ENCODE measurements at regions of chr15 and their contacts with region 1.

Region 1: DNA sequence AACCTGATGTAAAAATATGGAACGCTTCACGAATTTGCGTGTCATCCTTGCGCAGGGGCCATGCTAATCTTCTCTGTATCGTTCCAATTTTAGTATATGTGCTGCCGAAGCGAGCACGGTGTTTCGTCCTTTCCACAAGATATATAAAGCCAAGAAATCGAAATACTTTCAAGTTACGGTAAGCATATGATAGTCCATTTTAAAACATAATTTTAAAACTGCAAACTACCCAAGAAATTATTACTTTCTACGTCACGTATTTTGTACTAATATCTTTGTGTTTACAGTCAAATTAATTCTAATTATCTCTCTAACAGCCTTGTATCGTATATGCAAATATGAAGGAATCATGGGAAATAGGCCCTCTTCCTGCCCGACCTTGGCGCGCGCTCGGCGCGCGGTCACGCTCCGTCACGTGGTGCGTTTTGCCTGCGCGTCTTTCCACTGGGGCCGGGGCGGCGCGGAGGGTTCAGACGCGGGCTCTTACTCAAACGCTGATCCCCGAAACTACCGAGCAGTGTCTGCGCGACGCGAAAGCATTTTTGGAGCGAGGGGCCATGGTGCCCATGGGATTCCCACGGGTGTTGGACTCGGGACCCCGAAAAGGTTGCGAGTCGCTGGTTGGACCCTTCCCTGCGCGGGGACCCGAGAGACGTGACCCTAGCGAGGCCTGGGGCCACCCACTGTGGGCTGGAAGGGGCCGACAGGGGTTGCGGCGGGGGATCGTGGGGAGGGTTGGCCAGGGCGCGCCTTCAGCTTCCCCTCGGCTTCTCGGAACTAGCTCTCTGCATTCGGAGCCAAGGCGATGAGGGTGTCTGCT is at the start of gene RNU6-1:
- DNase-seq: peak; percentile 94 to 98
- ATAC-seq: peak; percentile 85 to 97 (median 92)
- H3K4me3 ChIP-seq: peak within 1 kb of the TSS; percentile 96
- H3K4me3 Mint-ChIP-seq: peak within 1 kb of the TSS; percentile 96
- H3K27ac ChIP-seq: peak within 1 kb of the TSS; percentile 97
- H3K27ac Mint-ChIP-seq: peak within 1 kb of the TSS; percentile 99
- H3K4me1 ChIP-seq: peaks cover 32% of the 10 kb centered on the region
- H3K4me1 Mint-ChIP-seq: peaks cover 35 to 41% of the 10 kb centered on the region in 2 donors
- H3K27me3 ChIP-seq: peaks cover 13% of the 10 kb centered on the region
- H3K27me3 Mint-ChIP-seq: peaks cover 16 to 20% of the 10 kb centered on the region in 2 donors
- CTCF ChIP-seq: no peak
- total RNA-seq, gene RNU6-1: not detected

Region 2: DNA sequence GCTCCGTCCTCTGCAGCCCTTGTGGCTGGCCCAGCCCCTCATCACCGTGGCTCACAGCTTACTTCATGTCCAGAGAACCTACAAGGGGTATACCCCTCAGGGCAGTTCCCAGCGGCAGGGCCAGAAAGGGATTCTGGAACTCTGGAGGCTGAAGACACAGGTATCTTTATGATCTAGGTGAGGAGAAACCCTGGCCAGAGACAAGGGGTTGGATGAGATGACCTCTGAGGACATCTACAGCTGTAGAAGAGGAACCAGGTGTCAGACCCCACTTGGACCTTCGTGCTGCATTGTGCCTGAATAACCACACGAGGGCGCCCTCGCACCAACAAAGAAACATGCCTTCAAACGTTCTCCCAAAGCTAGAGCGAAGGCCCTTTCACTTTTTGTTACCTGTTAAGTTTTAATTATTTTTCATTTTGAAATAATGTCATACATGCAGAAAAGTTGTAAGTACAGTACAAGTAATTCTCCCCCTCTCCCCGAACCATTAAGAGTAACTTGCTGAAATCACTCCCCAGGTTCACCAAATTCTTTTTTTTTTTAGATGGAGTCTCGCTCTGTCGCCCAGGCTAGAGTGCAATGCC is 893.5 kb before region 1 on chr15:
- intact Hi-C with region 1: loop called (anchors 5 kb)
- DNase-seq: peak; percentile 75 to 88
- ATAC-seq: peak; percentile 70 to 90 (median 86)
- H3K4me3 ChIP-seq: no peak overlapping the region
- H3K4me3 Mint-ChIP-seq: peak overlapping the region; percentile 17
- H3K27ac ChIP-seq: no peak overlapping the region
- H3K27ac Mint-ChIP-seq: no peak overlapping the region
- H3K4me1 ChIP-seq: no peaks in the 10 kb centered on the region
- H3K4me1 Mint-ChIP-seq: no peaks in the 10 kb centered on the region
- H3K27me3 ChIP-seq: no peaks in the 10 kb centered on the region
- H3K27me3 Mint-ChIP-seq: peaks cover 0 to 2% of the 10 kb centered on the region in 2 donors
- CTCF ChIP-seq: peak; percentile 94

Region 3: GRCh38 chr15:67366904-67367303 is 473.2 kb before region 1 on chr15:
- intact Hi-C with region 1: no loop called
- DNase-seq: no peak
- ATAC-seq: no peak
- H3K4me3 ChIP-seq: no peak overlapping the region
- H3K4me3 Mint-ChIP-seq: no peak overlapping the region
- H3K27ac ChIP-seq: no peak overlapping the region
- H3K27ac Mint-ChIP-seq: no peak overlapping the region
- H3K4me1 ChIP-seq: no peaks in the 10 kb centered on the region
- H3K4me1 Mint-ChIP-seq: no peaks in the 10 kb centered on the region
- H3K27me3 ChIP-seq: no peaks in the 10 kb centered on the region
- H3K27me3 Mint-ChIP-seq: peaks cover 3 to 18% of the 10 kb centered on the region in 2 donors
- CTCF ChIP-seq: no peak

Region 4: DNA sequence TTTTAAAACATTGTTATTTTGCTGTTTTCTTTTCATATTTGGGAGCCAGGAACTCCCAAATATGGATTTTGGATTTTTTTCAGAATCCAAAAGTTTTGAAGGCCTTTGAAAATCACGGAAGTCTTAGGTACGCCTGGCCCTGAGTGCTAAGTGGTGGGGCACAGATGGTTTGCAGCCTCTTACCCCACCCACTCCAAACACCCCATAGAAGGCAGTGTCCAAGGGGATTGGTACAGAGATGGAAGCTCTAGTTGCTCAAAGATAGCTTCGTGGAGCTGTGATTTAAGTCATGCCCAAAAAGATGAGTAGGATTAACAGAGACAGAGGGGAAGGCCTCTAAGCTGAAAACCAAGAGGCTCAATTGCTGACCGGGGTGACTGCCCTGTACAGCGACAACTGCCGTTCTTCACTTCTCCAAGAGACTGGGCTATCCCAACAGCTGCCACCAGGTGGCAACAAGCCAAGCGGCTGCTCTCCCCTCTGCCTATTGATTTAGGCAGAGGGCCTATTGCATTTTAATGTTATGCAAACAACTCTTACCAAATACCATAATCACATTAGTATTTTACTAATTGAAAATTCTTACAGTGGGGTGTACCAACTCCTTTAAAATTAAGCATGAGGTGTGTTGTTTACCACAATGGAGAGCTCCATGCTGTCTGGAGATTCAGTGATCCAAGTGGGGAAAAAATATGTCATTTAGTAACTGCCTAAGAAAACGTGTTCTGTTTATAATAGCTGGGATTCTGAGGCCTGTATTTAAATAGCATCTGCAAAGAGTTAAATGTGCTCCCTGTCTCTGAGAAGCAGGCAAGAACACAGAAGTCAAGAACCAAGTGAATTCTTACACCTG is 383.2 kb before region 1 on chr15:
- intact Hi-C with region 1: loop called (anchors 1 kb)
- DNase-seq: peak; percentile 71 to 85
- ATAC-seq: peak; percentile 89 to 99 (median 94)
- H3K4me3 ChIP-seq: no peak overlapping the region
- H3K4me3 Mint-ChIP-seq: no peak overlapping the region
- H3K27ac ChIP-seq: no peak overlapping the region
- H3K27ac Mint-ChIP-seq: no peak overlapping the region
- H3K4me1 ChIP-seq: peaks cover 3% of the 10 kb centered on the region
- H3K4me1 Mint-ChIP-seq: peaks cover 0 to 5% of the 10 kb centered on the region in 2 donors
- H3K27me3 ChIP-seq: no peaks in the 10 kb centered on the region
- H3K27me3 Mint-ChIP-seq: peaks cover 0 to 3% of the 10 kb centered on the region in 2 donors
- CTCF ChIP-seq: peak; percentile 95

Region 5: DNA sequence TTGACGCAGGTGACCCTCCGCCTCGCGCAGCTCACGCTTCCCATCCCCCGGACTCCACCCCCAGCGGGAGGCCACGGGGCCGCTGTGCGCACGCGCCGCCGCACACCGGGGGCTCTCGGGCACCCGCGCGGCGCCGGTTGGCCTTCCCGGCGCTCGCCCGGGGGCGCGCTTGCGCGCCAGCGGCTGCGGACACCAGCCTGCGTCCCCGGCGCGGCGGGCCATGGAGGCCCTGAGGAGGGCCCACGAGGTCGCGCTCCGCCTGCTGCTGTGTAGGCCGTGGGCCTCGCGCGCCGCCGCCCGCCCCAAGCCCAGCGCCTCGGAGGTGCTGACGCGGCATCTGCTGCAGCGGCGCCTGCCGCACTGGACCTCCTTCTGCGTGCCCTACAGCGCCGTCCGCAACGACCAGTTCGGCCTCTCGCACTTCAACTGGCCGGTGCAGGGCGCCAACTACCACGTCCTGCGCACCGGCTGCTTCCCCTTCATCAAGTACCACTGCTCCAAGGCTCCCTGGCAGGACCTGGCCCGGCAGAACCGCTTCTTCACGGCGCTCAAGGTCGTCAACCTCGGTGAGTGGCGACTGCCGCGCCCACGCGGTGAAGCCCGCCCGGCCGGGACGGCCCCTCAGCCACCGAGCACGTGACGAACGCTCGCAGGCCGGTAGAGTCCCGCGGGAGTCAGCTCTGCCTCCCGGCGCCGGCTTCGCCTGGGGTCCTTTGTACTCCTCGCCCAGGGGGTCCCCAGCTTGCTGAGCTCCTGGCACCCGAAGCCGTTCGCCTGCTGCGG is 318.9 kb before region 1 on chr15 and contains the start of gene C15orf61:
- intact Hi-C with region 1: loop called (anchors 1 kb)
- DNase-seq: peak; percentile 83 to 93
- ATAC-seq: peak; percentile 79 to 89 (median 81)
- H3K4me3 ChIP-seq: peak within 1 kb of the TSS; percentile 71
- H3K4me3 Mint-ChIP-seq: peak within 1 kb of the TSS; percentile 93
- H3K27ac ChIP-seq: peak within 1 kb of the TSS; percentile 97
- H3K27ac Mint-ChIP-seq: peak within 1 kb of the TSS; percentile 93 to 96
- H3K4me1 ChIP-seq: peaks cover 9% of the 10 kb centered on the region
- H3K4me1 Mint-ChIP-seq: peaks cover 16 to 22% of the 10 kb centered on the region in 2 donors
- H3K27me3 ChIP-seq: no peaks in the 10 kb centered on the region
- H3K27me3 Mint-ChIP-seq: no peaks in the 10 kb centered on the region
- CTCF ChIP-seq: no peak
- total RNA-seq, gene C15orf61: 8.7 to 16.4 (median 12.6) TPM

Region 6: GRCh38 chr15:67783303-67783702 is 56.8 kb before region 1 on chr15:
- intact Hi-C with region 1: loop called (anchors 1 kb)
- DNase-seq: peak; percentile 33 to 80
- ATAC-seq: peak; percentile 83 to 90 (median 88)
- H3K4me3 ChIP-seq: no peak overlapping the region
- H3K4me3 Mint-ChIP-seq: peak overlapping the region; percentile 72
- H3K27ac ChIP-seq: no peak overlapping the region
- H3K27ac Mint-ChIP-seq: peak overlapping the region; percentile 71 to 79
- H3K4me1 ChIP-seq: peaks cover 28% of the 10 kb centered on the region
- H3K4me1 Mint-ChIP-seq: peaks cover 28 to 29% of the 10 kb centered on the region in 2 donors
- H3K27me3 ChIP-seq: no peaks in the 10 kb centered on the region
- H3K27me3 Mint-ChIP-seq: no peaks in the 10 kb centered on the region
- CTCF ChIP-seq: peak; percentile 16

Region 7: DNA sequence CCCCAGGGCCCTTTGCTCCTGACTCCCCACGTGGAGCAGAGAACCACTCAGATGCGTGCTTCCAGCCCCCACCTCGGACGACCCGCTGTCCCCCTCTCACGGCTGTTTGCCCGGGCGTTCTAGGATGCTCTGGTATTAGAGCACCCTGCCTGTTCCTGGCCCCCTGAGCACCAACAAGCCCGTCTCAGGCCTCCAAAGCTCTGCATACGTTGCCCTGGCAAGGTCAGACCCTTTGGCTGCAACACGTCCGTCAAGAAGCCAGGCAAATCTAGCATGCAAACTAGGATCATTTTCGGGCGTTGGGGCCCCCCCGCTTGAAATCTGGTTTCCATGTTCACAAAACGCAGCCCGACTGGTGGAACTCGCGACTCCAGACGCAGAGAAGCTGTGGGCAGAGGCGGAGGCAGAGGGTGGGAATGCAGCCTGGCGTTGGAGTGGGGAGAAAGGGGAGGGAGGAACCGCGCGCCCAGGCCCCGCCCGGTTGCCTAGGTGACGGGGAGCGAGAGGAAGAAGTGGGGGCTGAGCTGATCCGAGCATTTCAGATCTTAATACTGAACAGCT is 127.8 kb after region 1 on chr15:
- intact Hi-C with region 1: no loop called
- DNase-seq: peak in 1 of 2 donors; percentile 9
- ATAC-seq: no peak
- H3K4me3 ChIP-seq: no peak overlapping the region
- H3K4me3 Mint-ChIP-seq: no peak overlapping the region
- H3K27ac ChIP-seq: no peak overlapping the region
- H3K27ac Mint-ChIP-seq: no peak overlapping the region
- H3K4me1 ChIP-seq: peaks cover 9% of the 10 kb centered on the region
- H3K4me1 Mint-ChIP-seq: peaks cover 0 to 6% of the 10 kb centered on the region in 2 donors
- H3K27me3 ChIP-seq: peaks cover 4% of the 10 kb centered on the region
- H3K27me3 Mint-ChIP-seq: peaks cover 33 to 61% of the 10 kb centered on the region in 2 donors
- CTCF ChIP-seq: no peak

Region 8: DNA sequence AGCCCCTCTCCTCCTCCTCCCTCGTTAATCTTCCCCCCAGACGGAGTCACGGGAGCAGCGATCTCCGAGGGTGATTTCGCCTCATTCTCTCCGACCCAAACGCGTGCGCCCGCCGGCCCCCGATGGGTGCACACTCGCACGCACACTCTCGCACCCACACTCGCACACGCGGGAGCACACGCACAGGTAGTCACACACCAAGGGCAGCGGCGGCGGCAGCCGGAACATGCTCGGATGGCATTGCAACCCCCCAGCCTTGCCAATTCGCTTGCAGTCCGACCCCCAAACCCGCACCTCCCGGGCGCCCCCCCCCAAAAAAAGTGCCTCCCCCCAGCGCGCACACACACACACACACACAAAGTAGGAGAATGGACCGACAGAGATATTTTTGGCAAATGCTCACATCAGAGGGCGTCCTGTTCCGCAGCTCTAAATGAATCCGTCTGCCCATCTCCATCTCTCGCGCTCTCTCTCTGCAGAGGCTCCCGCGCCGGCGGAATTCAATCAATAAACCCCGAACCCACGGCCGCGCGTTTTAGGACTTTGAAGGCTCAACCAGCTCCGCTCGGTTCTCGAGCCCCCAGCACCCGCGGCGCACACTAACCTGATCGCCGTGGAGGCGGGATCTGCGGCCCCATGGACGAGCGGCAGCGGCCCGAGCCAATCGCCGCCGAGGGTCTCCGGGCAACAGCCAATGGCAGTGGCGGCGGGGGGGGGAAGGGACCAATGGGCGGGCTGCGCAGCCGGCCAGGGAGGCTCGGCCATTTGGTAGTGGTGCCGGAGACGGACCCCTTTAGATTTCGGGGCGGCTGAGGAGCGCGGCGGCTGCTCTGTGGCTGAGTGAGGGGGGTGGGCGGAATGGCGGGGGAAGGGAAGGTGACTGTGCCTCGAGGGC is 980.4 kb after region 1 on chr15 and contains the start of gene ANP32A:
- intact Hi-C with region 1: loop called (anchors 10 kb)
- DNase-seq: peak; percentile 96 to 98
- ATAC-seq: peak; percentile 64 to 88 (median 80)
- H3K4me3 ChIP-seq: peak within 1 kb of the TSS; percentile 99
- H3K4me3 Mint-ChIP-seq: peak within 1 kb of the TSS; percentile 100
- H3K27ac ChIP-seq: peak within 1 kb of the TSS; percentile 85
- H3K27ac Mint-ChIP-seq: peak within 1 kb of the TSS; percentile 97 to 99
- H3K4me1 ChIP-seq: peaks cover 21% of the 10 kb centered on the region
- H3K4me1 Mint-ChIP-seq: peaks cover 40 to 43% of the 10 kb centered on the region in 2 donors
- H3K27me3 ChIP-seq: no peaks in the 10 kb centered on the region
- H3K27me3 Mint-ChIP-seq: no peaks in the 10 kb centered on the region
- CTCF ChIP-seq: no peak
- total RNA-seq, gene ANP32A: 133 to 150 (median 148) TPM

Measured in natural killer cell (primary cell).